Activated CD4-positive, alpha-beta memory T cell treated with anti-CD3 and anti-CD28 coated beads, Interleukin-2, amount 10 ng/mL, durations not matched to agents 7 days and 5 days (primary cell): ENCODE measurements at regions of chr14 and their contacts with region 1.

Region 1: GRCh38 chr14:52313903-52314594 is at the start of gene PTGER2:
- DNase-seq: peak; percentile 93
- H3K4me3 Mint-ChIP-seq: peak within 1 kb of the TSS; percentile 92
- H3K27ac Mint-ChIP-seq: peak within 1 kb of the TSS; percentile 97
- H3K4me1 Mint-ChIP-seq: peaks cover 63% of the 10 kb centered on the region
- H3K27me3 Mint-ChIP-seq: peaks cover 5% of the 10 kb centered on the region
- total RNA-seq, gene PTGER2: 108 to 112 TPM

Region 2: GRCh38 chr14:52146504-52146903 is 167.5 kb before region 1 on chr14:
- CTCF ChIA-PET with region 1: no interaction called
- POLR2A ChIA-PET with region 1: no interaction called
- DNase-seq: no peak
- H3K4me3 Mint-ChIP-seq: no peak overlapping the region
- H3K27ac Mint-ChIP-seq: no peak overlapping the region
- H3K4me1 Mint-ChIP-seq: no peaks in the 10 kb centered on the region
- H3K27me3 Mint-ChIP-seq: peaks cover 6% of the 10 kb centered on the region

Region 3: DNA sequence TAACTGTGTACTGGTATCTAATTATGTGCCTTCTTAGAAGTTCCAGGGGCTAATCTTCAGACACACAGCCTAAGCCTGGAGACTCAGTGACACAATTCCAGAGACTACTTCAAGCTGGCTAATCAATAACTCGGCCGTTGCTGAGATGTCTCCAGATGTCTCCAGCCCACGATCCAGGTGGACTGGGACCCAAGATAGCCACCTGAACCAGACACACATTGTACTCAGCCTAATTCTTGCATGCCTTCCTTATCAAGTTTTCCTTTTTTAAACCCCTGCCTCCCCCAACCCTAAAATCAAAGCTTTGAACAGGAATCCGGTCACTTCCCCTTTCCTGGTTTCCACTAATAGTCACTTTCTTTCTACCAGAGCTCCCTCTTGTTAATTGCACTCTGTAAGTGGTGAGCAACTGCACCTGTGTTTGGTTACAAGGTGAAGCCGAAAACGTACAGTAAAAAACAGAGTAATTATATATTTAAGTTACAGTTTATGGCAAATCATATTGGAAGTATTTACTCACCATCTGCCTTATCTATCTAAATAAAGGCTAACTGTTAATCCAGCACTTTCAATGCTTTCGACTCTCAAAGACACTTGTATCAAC is 86.3 kb before region 1 on chr14:
- CTCF ChIA-PET with region 1: no interaction called
- POLR2A ChIA-PET with region 1: no interaction called
- DNase-seq: no peak
- H3K4me3 Mint-ChIP-seq: no peak overlapping the region
- H3K27ac Mint-ChIP-seq: no peak overlapping the region
- H3K4me1 Mint-ChIP-seq: no peaks in the 10 kb centered on the region
- H3K27me3 Mint-ChIP-seq: no peaks in the 10 kb centered on the region

Region 4: DNA sequence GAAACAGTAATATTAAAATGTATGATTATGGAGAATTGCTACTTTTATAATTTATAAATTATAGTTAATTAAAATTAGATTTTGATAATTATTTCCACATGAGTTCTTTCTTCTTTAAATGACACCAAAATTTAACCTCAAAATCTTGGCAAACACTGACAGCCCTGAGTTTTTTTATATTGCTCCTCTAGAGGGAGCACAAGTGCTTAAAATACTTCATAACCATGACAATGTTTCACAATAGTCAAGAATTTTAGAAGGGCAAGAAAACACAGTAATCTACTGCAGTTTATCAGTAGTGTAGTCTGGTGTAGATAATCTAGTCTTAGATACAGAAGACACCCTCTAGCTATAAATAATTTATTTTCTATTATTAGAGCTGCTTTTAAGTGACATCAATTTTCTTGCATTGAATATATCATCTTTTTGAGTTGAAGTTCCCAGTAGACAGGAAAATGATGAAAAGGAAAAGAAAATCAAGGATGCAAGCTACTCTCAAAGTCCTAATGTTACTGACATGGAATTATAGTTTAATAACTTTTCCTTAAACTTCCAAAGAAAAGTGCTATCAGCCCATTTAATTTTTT is 14.3 kb before region 1 on chr14:
- CTCF ChIA-PET with region 1: interaction called, 19 read pairs
- POLR2A ChIA-PET with region 1: interaction called, 27 read pairs
- DNase-seq: no peak
- H3K4me3 Mint-ChIP-seq: no peak overlapping the region
- H3K27ac Mint-ChIP-seq: no peak overlapping the region
- H3K4me1 Mint-ChIP-seq: peaks cover 41% of the 10 kb centered on the region
- H3K27me3 Mint-ChIP-seq: peaks cover 12% of the 10 kb centered on the region

Region 5: GRCh38 chr14:52333823-52334657 is 20.0 kb after region 1 on chr14:
- CTCF ChIA-PET with region 1: interaction called, 4 read pairs
- POLR2A ChIA-PET with region 1: interaction called, 11 read pairs
- DNase-seq: no peak
- H3K4me3 Mint-ChIP-seq: no peak overlapping the region
- H3K27ac Mint-ChIP-seq: no peak overlapping the region
- H3K4me1 Mint-ChIP-seq: peaks cover 30% of the 10 kb centered on the region
- H3K27me3 Mint-ChIP-seq: peaks cover 2% of the 10 kb centered on the region

Region 6: GRCh38 chr14:52402812-52403526 is 88.9 kb after region 1 on chr14:
- CTCF ChIA-PET with region 1: interaction called, 6 read pairs
- POLR2A ChIA-PET with region 1: interaction called, 66 read pairs
- DNase-seq: no peak
- H3K4me3 Mint-ChIP-seq: no peak overlapping the region
- H3K27ac Mint-ChIP-seq: peak overlapping the region; percentile 40
- H3K4me1 Mint-ChIP-seq: peaks cover 70% of the 10 kb centered on the region
- H3K27me3 Mint-ChIP-seq: peaks cover 10% of the 10 kb centered on the region

Region 7: GRCh38 chr14:52552063-52552988 is 238.3 kb after region 1 on chr14 and contains the starts of genes GPR137C and TXNDC16:
- CTCF ChIA-PET with region 1: interaction called, 5 read pairs
- POLR2A ChIA-PET with region 1: interaction called, 62 read pairs
- DNase-seq: peak; percentile 100
- H3K4me3 Mint-ChIP-seq: peak within 1 kb of the TSS; percentile 92
- H3K27ac Mint-ChIP-seq: peak within 1 kb of the TSS; percentile 78
- H3K4me1 Mint-ChIP-seq: peaks cover 27% of the 10 kb centered on the region
- H3K27me3 Mint-ChIP-seq: peaks cover 20% of the 10 kb centered on the region
- total RNA-seq, gene GPR137C: 0.30 to 0.88 TPM
- total RNA-seq, gene TXNDC16: 8.8 to 9.4 TPM